Ascending aorta (tissue), 2 donors: ENCODE measurements at regions of chr2 and their contacts with region 1.

Region 1: GRCh38 chr2:204691911-204692510 is 146.7 kb downstream of the PARD3B start:
- DNase-seq: peak in 1 of 2 donors; percentile 70
- H3K4me3 ChIP-seq: no peak overlapping the region
- H3K27ac ChIP-seq: no peak overlapping the region
- H3K4me1 ChIP-seq: peaks cover 0 to 13% of the 10 kb centered on the region in 2 donors
- H3K27me3 ChIP-seq: no peaks in the 10 kb centered on the region
- CTCF ChIP-seq: peak; percentile 42 to 78 (median 65)

Region 2: GRCh38 chr2:204260162-204260877 is 431.7 kb before region 1 on chr2:
- intact Hi-C with region 1: loop called (anchors 5 kb)
- DNase-seq: peak; percentile 12 to 85
- H3K4me3 ChIP-seq: no peak overlapping the region
- H3K27ac ChIP-seq: no peak overlapping the region
- H3K4me1 ChIP-seq: peaks cover 0 to 9% of the 10 kb centered on the region in 2 donors
- H3K27me3 ChIP-seq: no peaks in the 10 kb centered on the region
- CTCF ChIP-seq: peak; percentile 51 to 80 (median 79)

Region 3: DNA sequence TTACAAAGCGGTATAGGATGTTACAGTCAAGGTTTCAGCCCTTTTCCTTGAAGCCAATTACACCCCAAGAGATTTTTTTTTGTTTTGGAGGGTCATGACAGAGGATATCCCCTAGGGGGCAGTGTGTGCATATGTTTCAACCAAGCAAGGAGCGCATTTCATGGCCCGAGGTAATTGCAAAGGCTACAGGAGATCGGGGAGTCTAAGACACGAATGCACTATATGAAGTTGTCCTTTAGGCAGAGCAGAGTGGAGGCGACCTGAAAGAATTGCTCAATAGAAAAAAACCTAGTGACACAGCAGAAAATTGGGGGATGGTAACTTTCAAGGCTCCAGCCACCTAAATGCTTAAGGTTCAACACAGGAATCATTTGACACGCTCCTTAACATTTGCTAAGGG is 366.5 kb before region 1 on chr2:
- intact Hi-C with region 1: loop called (anchors 1 kb)
- DNase-seq: peak in 1 of 2 donors; percentile 69
- H3K4me3 ChIP-seq: no peak overlapping the region
- H3K27ac ChIP-seq: no peak overlapping the region
- H3K4me1 ChIP-seq: peaks cover 0 to 2% of the 10 kb centered on the region in 2 donors
- H3K27me3 ChIP-seq: no peaks in the 10 kb centered on the region
- CTCF ChIP-seq: peak; percentile 73 to 84 (median 78)

Region 4: DNA sequence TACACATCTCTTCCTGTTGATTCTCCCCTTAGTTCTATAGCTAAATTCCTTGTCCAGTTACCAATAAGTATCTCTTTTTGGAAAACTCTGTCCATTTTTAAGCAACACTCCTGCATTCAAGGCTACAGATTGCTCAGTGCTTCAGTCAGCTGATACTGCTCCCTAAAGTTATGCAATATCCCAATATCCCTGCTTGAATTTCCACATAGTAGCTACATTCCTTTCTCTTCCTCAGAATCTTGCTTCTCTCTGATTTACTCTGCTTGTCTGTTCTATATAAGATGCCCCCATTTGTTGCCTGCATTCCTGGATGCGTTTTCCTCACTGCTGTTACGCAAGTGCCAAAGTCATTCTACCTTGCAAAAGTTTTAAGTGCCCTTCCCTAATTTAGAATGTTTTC is 36.9 kb before region 1 on chr2:
- intact Hi-C with region 1: no loop called
- DNase-seq: no peak
- H3K4me3 ChIP-seq: no peak overlapping the region
- H3K27ac ChIP-seq: no peak overlapping the region
- H3K4me1 ChIP-seq: no peaks in the 10 kb centered on the region
- H3K27me3 ChIP-seq: no peaks in the 10 kb centered on the region
- CTCF ChIP-seq: no peak

Region 5: DNA sequence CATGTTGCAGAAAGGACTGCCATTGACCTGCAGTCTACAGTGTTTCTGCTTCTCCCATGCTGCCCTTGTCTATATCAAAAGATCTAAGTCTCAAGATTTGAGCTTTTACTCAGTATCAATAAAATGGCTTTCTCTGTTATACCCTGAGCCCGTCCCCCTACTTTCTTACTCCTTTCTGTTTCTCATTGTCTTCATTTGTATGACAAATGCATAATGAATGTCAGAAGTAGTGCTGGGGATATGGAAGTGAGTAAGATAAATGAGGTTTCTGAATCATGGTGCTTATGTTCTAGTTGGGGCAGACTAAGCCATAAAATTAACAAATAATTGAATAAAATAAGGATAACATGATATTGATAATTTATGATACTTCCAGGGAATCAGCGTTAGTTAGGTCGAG is 18.1 kb before region 1 on chr2:
- intact Hi-C with region 1: no loop called
- DNase-seq: no peak
- H3K4me3 ChIP-seq: no peak overlapping the region
- H3K27ac ChIP-seq: no peak overlapping the region
- H3K4me1 ChIP-seq: no peaks in the 10 kb centered on the region
- H3K27me3 ChIP-seq: no peaks in the 10 kb centered on the region
- CTCF ChIP-seq: no peak

Region 6: GRCh38 chr2:204796581-204796980 is 104.6 kb after region 1 on chr2:
- intact Hi-C with region 1: no loop called
- DNase-seq: no peak
- H3K4me3 ChIP-seq: no peak overlapping the region
- H3K27ac ChIP-seq: no peak overlapping the region
- H3K4me1 ChIP-seq: no peaks in the 10 kb centered on the region
- H3K27me3 ChIP-seq: no peaks in the 10 kb centered on the region
- CTCF ChIP-seq: no peak